Head of caudate nucleus (tissue), 42 donors: ENCODE measurements at regions of chr15 and their contacts with region 1.

Region 1: DNA sequence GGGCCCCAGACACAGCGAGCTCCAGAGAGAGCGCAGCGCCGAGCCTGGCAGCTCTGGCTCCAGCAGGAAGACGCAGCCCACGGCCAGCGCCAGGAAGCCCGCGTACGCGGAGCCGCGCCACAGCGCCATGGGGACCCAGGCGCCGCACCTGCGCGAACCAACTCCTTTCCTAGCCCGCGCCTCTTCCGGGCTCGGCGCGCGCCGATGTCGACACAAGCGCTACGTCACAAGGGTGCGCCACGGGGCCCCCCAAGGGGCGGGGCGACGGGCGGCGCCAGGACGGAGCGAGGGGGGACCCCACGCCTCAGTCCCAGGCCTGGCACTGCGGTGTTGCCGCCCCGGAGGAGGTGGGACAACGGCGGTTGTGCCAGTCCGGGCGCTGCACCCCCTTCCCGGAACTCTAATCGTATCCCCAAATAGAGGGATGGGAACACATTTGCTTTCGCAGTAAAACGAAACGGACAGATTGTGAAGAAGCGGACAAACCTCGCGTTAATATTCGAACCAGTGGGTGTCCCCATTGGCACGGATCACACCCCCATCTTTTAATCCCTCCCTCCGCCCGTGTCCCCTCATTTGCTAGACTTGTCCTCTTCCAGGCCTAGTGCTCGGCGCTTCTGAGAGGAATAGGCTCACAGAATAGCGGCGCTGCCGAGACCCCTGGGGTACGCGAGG is at the start of gene ADPGK:
- DNase-seq: peak; percentile 77 to 97 (median 92)

Region 2: DNA sequence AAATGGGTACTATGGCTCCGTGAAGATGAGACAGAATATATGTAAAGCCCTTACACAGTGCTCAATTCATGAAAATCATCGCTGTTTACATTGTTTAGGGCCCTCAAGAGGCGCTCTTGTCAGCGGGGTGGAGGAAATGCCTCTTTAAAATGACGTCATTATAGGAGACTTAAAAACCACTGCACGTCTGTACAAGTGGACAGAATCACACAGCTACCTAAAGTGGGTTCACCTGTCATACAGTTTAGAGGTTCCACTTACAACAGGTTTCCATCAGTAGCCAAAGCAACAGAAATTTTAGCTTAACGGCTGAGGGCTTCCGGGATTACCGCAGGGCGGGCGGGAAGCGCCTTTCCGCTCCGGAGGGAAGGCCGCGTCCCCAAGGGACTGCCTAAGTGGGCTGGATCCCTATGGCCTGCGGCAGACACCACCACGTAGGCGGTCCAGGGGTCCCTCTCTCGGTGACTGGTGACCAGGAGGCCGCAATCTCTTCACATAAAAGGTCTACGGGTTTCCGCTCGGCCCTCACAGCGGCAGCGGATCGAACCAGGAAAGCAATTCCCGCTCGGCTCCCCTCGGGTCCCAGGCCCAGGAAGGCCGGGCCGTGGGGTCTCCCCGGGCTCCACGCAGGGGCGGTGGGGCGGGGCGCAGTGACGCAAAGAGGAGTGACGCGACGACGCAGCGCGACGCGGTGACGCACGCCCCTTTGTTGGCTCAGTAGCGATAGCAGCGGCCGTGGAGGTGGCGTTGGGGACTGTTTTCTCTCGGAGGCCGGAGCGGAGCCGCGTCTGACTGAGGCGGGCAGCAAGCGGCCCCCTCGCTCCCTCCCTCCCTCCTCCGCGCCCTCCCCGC is 309.9 kb before region 1 on chr15 and contains the start of gene ARIH1:
- intact Hi-C with region 1: loop called (anchors 10 kb)
- DNase-seq: peak; percentile 95 to 99 (median 99)

Region 3: DNA sequence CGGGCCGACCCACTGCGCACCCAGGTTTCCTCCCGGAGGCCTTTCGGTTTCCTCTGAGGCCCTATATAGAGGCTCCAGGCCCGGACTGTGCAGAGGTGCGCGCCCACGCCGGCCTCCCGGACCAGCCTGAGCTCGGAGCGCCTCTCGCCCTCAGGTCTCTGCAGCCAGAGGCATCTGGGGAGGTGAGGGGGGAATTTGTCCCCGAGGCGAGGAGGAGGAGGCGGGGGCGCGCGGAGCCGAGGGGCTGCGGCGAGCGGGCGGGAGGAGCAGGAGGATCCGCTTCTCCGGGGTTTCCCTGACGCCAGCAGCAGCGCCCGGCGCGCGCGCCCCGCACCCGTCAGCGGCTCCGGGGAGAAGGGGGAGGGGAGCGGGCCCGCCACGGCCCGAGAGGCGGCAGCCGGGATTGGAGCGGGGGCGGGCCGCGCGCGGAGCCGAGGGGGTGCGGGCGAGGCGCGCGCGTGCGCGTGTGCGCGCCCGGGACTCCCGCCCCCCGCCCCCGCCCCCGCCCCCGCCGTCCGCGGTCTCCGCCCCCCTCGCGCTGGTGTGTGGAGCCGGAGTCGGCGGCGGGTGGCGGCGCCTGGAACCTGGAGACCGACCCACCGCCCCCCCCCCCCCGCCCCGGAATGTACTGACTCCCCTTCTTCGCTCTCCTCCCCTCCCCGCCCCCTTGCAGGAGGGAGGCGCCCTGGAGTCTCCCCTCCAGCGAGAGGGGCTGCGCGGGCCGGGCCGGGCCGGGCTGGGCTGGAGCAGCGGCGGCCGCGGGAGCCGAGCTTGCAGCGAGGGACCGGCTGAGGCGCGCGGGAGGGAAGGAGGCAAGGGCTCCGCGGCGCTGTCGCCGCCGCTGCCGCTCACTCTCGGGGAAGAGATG is 268.3 kb after region 1 on chr15 and contains the start of gene NEO1:
- intact Hi-C with region 1: loop called (anchors 2 kb)
- DNase-seq: peak; percentile 70 to 96 (median 92)

Region 4: DNA sequence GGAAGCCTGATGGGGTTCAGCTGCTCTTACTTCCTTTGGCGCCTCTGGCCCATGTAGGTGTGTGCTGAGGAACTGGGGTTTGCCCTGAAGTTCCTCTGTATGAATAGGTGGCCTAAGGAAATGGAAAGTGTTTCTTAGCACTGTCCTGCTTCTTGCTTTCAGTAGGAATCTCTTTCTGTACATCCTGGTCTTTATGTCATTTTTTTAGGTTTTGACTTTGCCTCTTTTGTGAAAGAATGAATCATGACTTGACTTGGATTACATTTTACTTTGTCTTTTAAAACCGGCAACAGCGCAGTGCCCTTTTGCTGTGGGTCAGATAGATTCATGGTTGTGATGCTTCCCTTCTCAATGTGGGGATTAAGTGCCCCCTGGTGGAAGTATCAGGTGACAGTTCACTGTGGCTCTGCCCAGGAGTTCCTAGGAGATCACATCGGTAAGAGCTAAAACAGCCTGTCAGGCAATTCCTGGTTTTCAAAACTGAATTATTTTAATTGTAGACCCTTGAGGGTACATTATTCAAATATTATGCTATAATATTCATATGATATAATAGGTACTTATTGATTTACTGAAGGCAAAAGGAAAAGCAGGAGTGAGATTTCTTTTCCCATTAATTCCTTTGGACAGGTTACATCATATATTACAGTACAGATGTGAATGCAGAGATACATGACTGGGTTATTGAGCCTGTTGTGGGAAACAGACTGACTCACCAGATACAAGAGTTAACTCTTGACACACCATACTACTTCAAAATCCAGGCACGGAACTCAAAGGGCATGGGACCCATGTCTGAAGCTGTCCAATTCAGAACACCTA is 489.7 kb after region 1 on chr15:
- intact Hi-C with region 1: loop called (anchors 5 kb)
- DNase-seq: peak in 41 of 42 donors; percentile 26 to 87 (median 70)